Endothelial cell of umbilical vein (primary cell): ENCODE measurements at regions of chr11 and their contacts with region 1.

Region 1: DNA sequence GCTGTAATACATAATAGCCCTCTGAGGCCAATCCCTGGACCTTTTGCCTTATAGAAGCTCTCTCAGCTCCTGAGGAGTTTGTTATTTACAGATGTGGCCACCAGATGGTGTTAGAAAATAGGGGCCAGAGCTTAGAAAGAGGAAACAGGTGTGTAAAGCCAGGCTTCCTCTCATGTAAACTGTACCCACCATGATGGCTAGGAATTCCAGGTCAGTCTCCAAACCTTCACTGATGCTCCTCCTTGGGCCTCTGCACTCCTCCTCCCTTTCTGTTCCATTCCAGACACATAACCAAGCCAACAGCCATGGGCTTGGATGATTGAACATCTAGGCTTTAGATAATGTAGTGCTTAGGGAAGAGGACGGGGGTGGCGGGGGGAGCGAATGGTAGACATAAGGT is 39.7 kb downstream of the USP35 start:
- DNase-seq: peak; percentile 82
- H3K4me3 ChIP-seq: no peak overlapping the region
- H3K27ac ChIP-seq: no peak overlapping the region
- H3K4me1 ChIP-seq: peaks cover 4% of the 10 kb centered on the region
- H3K27me3 ChIP-seq: no peaks in the 10 kb centered on the region
- CTCF ChIP-seq: peak; percentile 38 to 59
- POLR2A ChIP-seq: no peak

Region 2: GRCh38 chr11:78239781-78240180 is 11.3 kb after region 1 on chr11:
- CTCF ChIA-PET with region 1: interaction called, 12 read pairs
- POLR2A ChIA-PET with region 1: no interaction called
- dilution Hi-C with region 1: no loop called
- intact Hi-C with region 1: no loop called
- DNase-seq: no peak
- H3K4me3 ChIP-seq: no peak overlapping the region
- H3K27ac ChIP-seq: no peak overlapping the region
- H3K4me1 ChIP-seq: peaks cover 3% of the 10 kb centered on the region
- H3K27me3 ChIP-seq: no peaks in the 10 kb centered on the region
- CTCF ChIP-seq: no peak
- POLR2A ChIP-seq: no peak

Region 3: GRCh38 chr11:78256962-78257361 is 28.5 kb after region 1 on chr11:
- CTCF ChIA-PET with region 1: interaction called, 21 read pairs
- POLR2A ChIA-PET with region 1: no interaction called
- dilution Hi-C with region 1: no loop called
- intact Hi-C with region 1: no loop called
- DNase-seq: peak; percentile 91
- H3K4me3 ChIP-seq: no peak overlapping the region
- H3K27ac ChIP-seq: no peak overlapping the region
- H3K4me1 ChIP-seq: peaks cover 21% of the 10 kb centered on the region
- H3K27me3 ChIP-seq: no peaks in the 10 kb centered on the region
- CTCF ChIP-seq: no peak
- POLR2A ChIP-seq: no peak

Region 4: DNA sequence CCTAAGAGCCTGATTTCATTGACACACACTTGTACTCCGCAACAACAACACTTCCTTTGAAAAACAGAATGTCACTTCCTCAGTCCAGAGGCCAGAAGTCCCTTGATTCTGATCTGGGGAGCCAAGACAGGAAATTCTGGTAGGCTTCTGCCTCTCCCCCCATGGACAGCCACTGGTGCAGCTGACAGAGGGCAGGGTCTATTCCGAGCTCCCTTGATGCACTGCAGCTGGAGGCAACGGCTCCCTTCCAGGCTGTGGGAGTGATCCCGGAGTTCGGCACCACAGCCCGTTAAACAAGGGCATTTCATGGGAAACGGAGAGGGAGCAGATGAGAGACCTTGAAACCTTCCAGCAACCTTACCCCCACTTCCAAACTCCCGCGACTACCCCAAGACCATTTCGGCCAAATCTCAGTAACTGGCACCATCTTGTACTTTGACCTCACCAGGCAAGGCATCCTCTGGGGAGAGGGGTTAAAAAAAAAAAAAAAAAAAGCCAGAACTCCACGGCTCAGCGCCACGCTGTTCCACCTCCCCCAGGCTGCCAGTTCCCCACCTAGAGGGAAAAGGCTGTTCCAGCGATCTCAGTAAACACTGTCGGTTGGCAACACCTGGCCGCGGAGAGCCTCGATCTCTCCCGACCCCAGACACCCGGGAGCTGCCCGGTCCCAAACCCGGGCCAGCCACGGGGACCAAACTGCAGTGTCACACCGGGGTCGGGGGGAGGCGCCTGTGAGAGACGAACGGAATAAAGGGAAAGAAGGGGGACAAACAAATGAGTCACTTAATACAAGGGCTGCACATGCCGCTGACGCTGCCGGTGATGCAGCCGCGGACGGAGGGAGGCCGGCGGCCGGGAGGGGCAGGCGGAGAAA is 188.1 kb after region 1 on chr11:
- CTCF ChIA-PET with region 1: interaction called, 89 read pairs
- POLR2A ChIA-PET with region 1: interaction called, 3 read pairs
- dilution Hi-C with region 1: no loop called
- intact Hi-C with region 1: loop called (anchors 1 kb)
- DNase-seq: peak; percentile 91
- H3K4me3 ChIP-seq: peak overlapping the region; percentile 40 to 91 (median 75)
- H3K27ac ChIP-seq: peak overlapping the region; percentile 91
- H3K4me1 ChIP-seq: peaks cover 46% of the 10 kb centered on the region
- H3K27me3 ChIP-seq: no peaks in the 10 kb centered on the region
- CTCF ChIP-seq: peak; percentile 28 to 59
- POLR2A ChIP-seq: peak; percentile 58

Region 5: GRCh38 chr11:78574386-78575381 is 346.2 kb after region 1 on chr11 and contains the start of gene NARS2:
- CTCF ChIA-PET with region 1: interaction called, 17 read pairs
- POLR2A ChIA-PET with region 1: no interaction called
- dilution Hi-C with region 1: no loop called
- intact Hi-C with region 1: no loop called
- DNase-seq: peak; percentile 97
- H3K4me3 ChIP-seq: peak within 1 kb of the TSS; percentile 84 to 93 (median 91)
- H3K27ac ChIP-seq: peak within 1 kb of the TSS; percentile 60
- H3K4me1 ChIP-seq: peaks cover 14% of the 10 kb centered on the region
- H3K27me3 ChIP-seq: no peaks in the 10 kb centered on the region
- CTCF ChIP-seq: no peak
- POLR2A ChIP-seq: peak; percentile 79
- total RNA-seq, gene NARS2: 15.5 and 16.7 TPM in 2 replicates